CD4-positive, alpha-beta memory T cell (primary cell): ENCODE measurements at regions of chr16 and their contacts with region 1.

Region 1: GRCh38 chr16:27179500-27180072 is 23.7 kb upstream of the KDM8 start:
- DNase-seq: peak; percentile 81 to 86 (median 85)
- H3K4me3 ChIP-seq: no peak overlapping the region
- H3K4me3 Mint-ChIP-seq: peak overlapping the region in 3 of 8 donors; percentile 0 to 64 (median 22)
- H3K27ac ChIP-seq: no peak overlapping the region
- H3K27ac Mint-ChIP-seq: peak overlapping the region; percentile 1 to 93 (median 85)
- H3K4me1 ChIP-seq: peaks cover 25% of the 10 kb centered on the region
- H3K4me1 Mint-ChIP-seq: peaks cover 21 to 46% (median 31%) of the 10 kb centered on the region in 4 donors
- H3K27me3 ChIP-seq: no peaks in the 10 kb centered on the region
- H3K27me3 Mint-ChIP-seq: no peaks in the 10 kb centered on the region

Region 2: GRCh38 chr16:27080870-27081269 is 98.7 kb before region 1 on chr16:
- CTCF ChIA-PET with region 1: no interaction called
- POLR2A ChIA-PET with region 1: no interaction called
- intact Hi-C with region 1: no loop called
- DNase-seq: peak in 1 of 5 donors; percentile 3
- H3K4me3 ChIP-seq: no peak overlapping the region
- H3K4me3 Mint-ChIP-seq: no peak overlapping the region
- H3K27ac ChIP-seq: no peak overlapping the region
- H3K27ac Mint-ChIP-seq: no peak overlapping the region
- H3K4me1 ChIP-seq: no peaks in the 10 kb centered on the region
- H3K4me1 Mint-ChIP-seq: peaks cover 0 to 2% (median 0%) of the 10 kb centered on the region in 4 donors
- H3K27me3 ChIP-seq: no peaks in the 10 kb centered on the region
- H3K27me3 Mint-ChIP-seq: peaks cover 21 to 42% of the 10 kb centered on the region in 2 donors

Region 3: GRCh38 chr16:27195941-27196595 is 16.5 kb after region 1 on chr16:
- CTCF ChIA-PET with region 1: interaction called, 164 read pairs
- POLR2A ChIA-PET with region 1: interaction called, 95 read pairs
- intact Hi-C with region 1: loop called (anchors 1 kb)
- DNase-seq: peak; percentile 85 to 90 (median 86)
- H3K4me3 ChIP-seq: no peak overlapping the region
- H3K4me3 Mint-ChIP-seq: peak overlapping the region in 7 of 8 donors; percentile 46 to 89 (median 79)
- H3K27ac ChIP-seq: peak overlapping the region; percentile 43
- H3K27ac Mint-ChIP-seq: peak overlapping the region; percentile 85 to 99 (median 98)
- H3K4me1 ChIP-seq: peaks cover 70% of the 10 kb centered on the region
- H3K4me1 Mint-ChIP-seq: peaks cover 56 to 83% (median 71%) of the 10 kb centered on the region in 4 donors
- H3K27me3 ChIP-seq: no peaks in the 10 kb centered on the region
- H3K27me3 Mint-ChIP-seq: no peaks in the 10 kb centered on the region

Region 4: DNA sequence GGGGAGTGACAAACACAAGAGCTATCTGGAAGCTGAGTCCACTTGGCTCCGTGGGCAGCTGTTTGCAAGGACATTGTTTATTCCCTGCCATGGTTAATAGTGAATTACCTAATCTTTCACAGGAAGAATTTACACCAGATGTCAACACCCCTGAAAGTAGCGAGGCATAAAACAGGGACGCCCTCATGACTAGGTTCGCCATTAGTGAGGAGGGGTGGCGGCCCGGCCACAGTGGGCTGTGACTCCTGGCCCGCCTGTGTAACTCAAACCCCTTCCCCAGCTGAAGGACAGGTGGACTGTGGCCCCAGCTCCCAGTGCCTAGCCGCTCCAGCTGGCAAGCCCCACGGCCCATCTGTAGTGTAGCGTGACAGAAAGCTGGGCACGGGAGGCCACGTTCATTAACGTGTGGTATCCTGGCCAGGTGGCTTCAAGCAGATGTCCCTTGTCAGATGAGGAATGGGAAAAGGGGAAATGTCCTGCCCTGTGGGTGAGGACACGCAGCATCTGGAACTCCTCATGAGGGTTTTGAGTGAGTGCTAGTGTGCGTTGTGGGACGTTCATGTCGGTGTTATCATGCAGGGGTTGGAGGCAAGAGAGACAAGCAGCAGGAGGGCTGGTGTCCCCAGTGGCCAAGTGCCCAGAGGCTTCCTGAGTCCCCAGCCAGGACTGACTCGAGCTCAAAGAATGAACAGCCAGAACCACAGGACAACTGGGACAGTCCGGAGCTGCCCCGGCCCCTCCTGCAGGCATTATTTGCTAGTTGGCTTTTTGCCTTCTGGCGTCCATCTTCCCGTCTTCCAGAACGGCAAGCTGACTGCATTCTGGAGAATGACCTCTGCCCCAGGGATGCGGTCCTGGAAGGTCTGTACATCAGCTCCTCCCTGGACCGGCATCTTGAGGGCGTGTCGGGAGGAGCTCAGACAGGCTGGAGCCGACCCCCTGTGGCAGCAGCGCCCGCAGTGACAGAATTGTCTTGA is 43.0 kb after region 1 on chr16:
- CTCF ChIA-PET with region 1: interaction called, 17 read pairs
- POLR2A ChIA-PET with region 1: interaction called, 8 read pairs
- intact Hi-C with region 1: no loop called
- DNase-seq: no peak
- H3K4me3 ChIP-seq: no peak overlapping the region
- H3K4me3 Mint-ChIP-seq: no peak overlapping the region
- H3K27ac ChIP-seq: no peak overlapping the region
- H3K27ac Mint-ChIP-seq: peak overlapping the region in 6 of 7 donors; percentile 22 to 75 (median 48)
- H3K4me1 ChIP-seq: no peaks in the 10 kb centered on the region
- H3K4me1 Mint-ChIP-seq: peaks cover 7 to 23% (median 14%) of the 10 kb centered on the region in 4 donors
- H3K27me3 ChIP-seq: no peaks in the 10 kb centered on the region
- H3K27me3 Mint-ChIP-seq: no peaks in the 10 kb centered on the region

Region 5: GRCh38 chr16:27326738-27327585 is 147.4 kb after region 1 on chr16:
- CTCF ChIA-PET with region 1: interaction called, 10 read pairs
- POLR2A ChIA-PET with region 1: interaction called, 3 read pairs
- intact Hi-C with region 1: no loop called
- DNase-seq: peak in 3 of 5 donors; percentile 24 to 47 (median 31)
- H3K4me3 ChIP-seq: no peak overlapping the region
- H3K4me3 Mint-ChIP-seq: peak overlapping the region; percentile 48 to 76 (median 64)
- H3K27ac ChIP-seq: peak overlapping the region; percentile 34
- H3K27ac Mint-ChIP-seq: peak overlapping the region; percentile 64 to 95 (median 85)
- H3K4me1 ChIP-seq: peaks cover 86% of the 10 kb centered on the region
- H3K4me1 Mint-ChIP-seq: peaks cover 45 to 92% (median 75%) of the 10 kb centered on the region in 4 donors
- H3K27me3 ChIP-seq: no peaks in the 10 kb centered on the region
- H3K27me3 Mint-ChIP-seq: no peaks in the 10 kb centered on the region

Region 6: GRCh38 chr16:27408012-27408601 is 228.5 kb after region 1 on chr16:
- CTCF ChIA-PET with region 1: interaction called, 10 read pairs
- POLR2A ChIA-PET with region 1: interaction called, 3 read pairs
- intact Hi-C with region 1: no loop called
- DNase-seq: peak in 1 of 5 donors; percentile 68
- H3K4me3 ChIP-seq: peak overlapping the region in 1 of 2 donors; percentile 0
- H3K4me3 Mint-ChIP-seq: peak overlapping the region; percentile 59 to 99 (median 90)
- H3K27ac ChIP-seq: peak overlapping the region; percentile 66
- H3K27ac Mint-ChIP-seq: peak overlapping the region; percentile 85 to 97 (median 90)
- H3K4me1 ChIP-seq: peaks cover 85% of the 10 kb centered on the region
- H3K4me1 Mint-ChIP-seq: peaks cover 54 to 89% (median 67%) of the 10 kb centered on the region in 4 donors
- H3K27me3 ChIP-seq: no peaks in the 10 kb centered on the region
- H3K27me3 Mint-ChIP-seq: no peaks in the 10 kb centered on the region

Region 7: GRCh38 chr16:28277537-28278388 is 1098.2 kb after region 1 on chr16:
- CTCF ChIA-PET with region 1: no interaction called
- POLR2A ChIA-PET with region 1: no interaction called
- intact Hi-C with region 1: no loop called
- DNase-seq: peak; percentile 79 to 86 (median 80)
- H3K4me3 ChIP-seq: peak overlapping the region; percentile 69 to 76
- H3K4me3 Mint-ChIP-seq: peak overlapping the region; percentile 76 to 88 (median 84)
- H3K27ac ChIP-seq: peak overlapping the region; percentile 60
- H3K27ac Mint-ChIP-seq: peak overlapping the region; percentile 79 to 98 (median 94)
- H3K4me1 ChIP-seq: peaks cover 37% of the 10 kb centered on the region
- H3K4me1 Mint-ChIP-seq: peaks cover 24 to 49% (median 37%) of the 10 kb centered on the region in 4 donors
- H3K27me3 ChIP-seq: no peaks in the 10 kb centered on the region
- H3K27me3 Mint-ChIP-seq: peaks cover 0 to 8% of the 10 kb centered on the region in 2 donors